ENCODE measurements at regions of chr11 and their contacts with region 1.

Region 1: GRCh38 chr11:727859-728748 is 19.2 kb upstream of the TALDO1 start:
- DNase-seq: peak; percentile 94
- H3K4me3 ChIP-seq: no peak overlapping the region
- H3K27ac ChIP-seq: peak overlapping the region; percentile 55
- H3K4me1 ChIP-seq: peaks cover 51% of the 10 kb centered on the region
- H3K27me3 ChIP-seq: no peaks in the 10 kb centered on the region
- CTCF ChIP-seq: peak; percentile 86 to 100

Region 2: DNA sequence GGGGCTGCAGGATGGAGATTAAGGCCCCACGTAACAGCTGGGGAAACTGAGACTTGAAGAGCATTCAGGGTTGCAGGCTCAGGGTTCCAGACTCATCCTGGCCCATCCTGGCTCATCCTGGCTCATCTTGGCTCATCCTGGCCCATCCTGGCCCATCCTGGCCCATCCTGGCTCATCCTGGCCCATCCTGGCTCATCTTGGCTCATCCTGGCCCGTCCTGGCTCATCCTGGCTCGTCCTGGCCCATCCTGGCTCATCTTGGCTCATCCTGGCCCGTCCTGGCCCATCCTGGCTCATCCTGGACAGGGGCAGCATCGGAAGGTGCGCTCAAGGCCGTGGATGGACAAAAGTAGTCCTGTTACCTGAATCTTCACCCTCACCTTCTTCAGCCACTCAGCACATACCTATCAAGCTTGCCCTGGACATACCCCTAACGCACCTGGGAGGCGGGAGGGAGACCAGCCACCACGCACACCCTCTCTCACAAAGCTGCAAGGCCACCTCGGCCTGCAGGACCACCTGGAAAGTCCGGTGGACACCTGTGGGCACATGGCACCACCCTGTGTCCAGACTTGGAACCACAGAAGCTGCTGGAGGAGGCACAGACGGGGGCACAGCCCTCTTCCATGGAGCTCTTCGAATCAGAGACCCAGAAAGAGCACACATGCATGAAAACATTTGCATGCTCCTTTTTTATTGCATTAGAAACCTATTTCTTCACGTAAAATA is 470.2 kb before region 1 on chr11:
- CTCF ChIA-PET with region 1: no interaction called
- dilution Hi-C with region 1: no loop called
- in situ Hi-C with region 1: no loop called
- intact Hi-C with region 1: no loop called
- DNase-seq: no peak
- H3K4me3 ChIP-seq: no peak overlapping the region
- H3K27ac ChIP-seq: no peak overlapping the region
- H3K4me1 ChIP-seq: no peaks in the 10 kb centered on the region
- H3K27me3 ChIP-seq: no peaks in the 10 kb centered on the region
- CTCF ChIP-seq: peak; percentile 5 to 37

Region 3: GRCh38 chr11:535519-536454 is 192.3 kb before region 1 on chr11 and contains the start of gene HRAS:
- CTCF ChIA-PET with region 1: no interaction called
- dilution Hi-C with region 1: no loop called
- in situ Hi-C with region 1: no loop called
- intact Hi-C with region 1: loop called (anchors 2 kb)
- DNase-seq: peak; percentile 93
- H3K4me3 ChIP-seq: peak within 1 kb of the TSS; percentile 87 to 89 (median 88)
- H3K27ac ChIP-seq: peak within 1 kb of the TSS; percentile 82
- H3K4me1 ChIP-seq: peaks cover 38% of the 10 kb centered on the region
- H3K27me3 ChIP-seq: no peaks in the 10 kb centered on the region
- CTCF ChIP-seq: no peak
- total RNA-seq, gene HRAS: 36.5 to 194 TPM

Region 4: DNA sequence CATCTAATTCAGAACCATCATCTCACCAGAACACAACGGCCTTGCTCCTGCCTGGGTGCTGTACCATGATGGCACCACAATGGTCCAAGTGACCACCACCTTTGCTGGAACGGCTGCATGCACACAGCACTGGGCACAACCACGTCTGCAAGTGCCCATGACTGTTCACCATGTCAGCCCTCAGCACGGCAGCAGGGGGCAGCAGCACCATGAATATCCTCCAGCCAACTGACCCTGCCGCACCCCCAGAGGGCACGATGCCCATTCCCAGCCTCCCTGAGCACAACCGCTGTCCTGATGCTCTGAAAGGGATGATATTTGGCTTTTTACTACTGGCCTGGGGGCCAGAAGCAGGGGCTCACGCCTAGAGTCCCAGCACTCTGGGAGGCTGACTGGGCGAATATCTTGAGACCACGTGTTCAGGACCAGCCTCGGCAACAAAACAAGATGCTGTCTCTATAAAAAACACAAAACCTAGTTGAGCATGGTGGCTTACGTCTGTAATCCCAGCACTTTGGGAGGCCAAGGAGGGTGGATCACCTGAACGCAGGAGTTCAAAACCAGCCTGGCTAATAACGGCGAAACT is 65.3 kb before region 1 on chr11:
- CTCF ChIA-PET with region 1: no interaction called
- dilution Hi-C with region 1: no loop called
- in situ Hi-C with region 1: no loop called
- intact Hi-C with region 1: loop called (anchors 1 kb)
- DNase-seq: peak; percentile 35
- H3K4me3 ChIP-seq: no peak overlapping the region
- H3K27ac ChIP-seq: no peak overlapping the region
- H3K4me1 ChIP-seq: peaks cover 16% of the 10 kb centered on the region
- H3K27me3 ChIP-seq: no peaks in the 10 kb centered on the region
- CTCF ChIP-seq: peak; percentile 74 to 78

Region 5: DNA sequence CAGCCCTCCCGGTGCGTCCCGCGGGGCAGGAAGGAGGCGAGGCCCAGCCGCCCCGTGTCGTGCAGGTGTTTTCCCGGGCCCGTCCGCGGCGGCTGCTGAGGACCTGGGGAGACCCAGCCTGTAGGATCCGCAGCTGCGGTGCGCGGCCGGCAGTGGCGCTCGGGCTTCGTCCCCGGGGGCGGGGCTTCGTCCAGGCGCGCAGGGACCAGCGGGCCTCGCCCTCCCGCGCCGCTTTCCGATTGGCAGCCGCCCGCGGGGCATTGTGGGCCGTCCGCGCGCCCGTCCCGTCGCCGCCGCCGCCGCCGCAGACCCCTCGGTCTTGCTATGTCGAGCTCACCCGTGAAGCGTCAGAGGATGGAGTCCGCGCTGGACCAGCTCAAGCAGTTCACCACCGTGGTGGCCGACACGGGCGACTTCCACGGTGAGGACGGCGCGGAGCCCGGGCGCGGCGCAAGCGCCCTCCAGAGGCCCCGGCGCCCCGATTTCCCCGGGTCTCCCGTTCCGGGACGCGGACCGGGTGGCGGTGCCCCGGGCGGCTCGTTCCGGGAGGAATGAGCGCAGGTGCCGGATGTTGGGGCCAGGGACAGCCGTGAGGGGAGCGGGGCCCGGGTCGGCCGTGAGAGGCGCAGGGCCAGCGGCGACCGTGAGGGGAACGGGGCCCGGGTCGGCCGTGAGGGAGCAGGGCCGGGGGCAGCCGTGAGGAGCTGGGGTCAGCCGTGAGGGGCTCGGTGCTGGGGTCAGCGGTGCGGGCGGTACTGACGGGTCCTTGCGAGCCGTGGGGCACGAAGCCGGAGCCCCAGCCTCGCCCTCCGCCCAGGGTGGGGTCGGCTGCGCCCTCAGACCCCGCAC is 19.3 kb after region 1 on chr11 and contains the start of gene TALDO1:
- CTCF ChIA-PET with region 1: no interaction called
- dilution Hi-C with region 1: no loop called
- in situ Hi-C with region 1: no loop called
- intact Hi-C with region 1: loop called (anchors 2 kb)
- DNase-seq: peak; percentile 86
- H3K4me3 ChIP-seq: peak within 1 kb of the TSS; percentile 87 to 92 (median 90)
- H3K27ac ChIP-seq: peak within 1 kb of the TSS; percentile 71
- H3K4me1 ChIP-seq: peaks cover 19% of the 10 kb centered on the region
- H3K27me3 ChIP-seq: no peaks in the 10 kb centered on the region
- CTCF ChIP-seq: peak; percentile 5 to 42
- total RNA-seq, gene TALDO1: 102 to 140 TPM

Region 6: GRCh38 chr11:798093-798713 is 70.1 kb after region 1 on chr11 and contains the start of gene SLC25A22:
- CTCF ChIA-PET with region 1: no interaction called
- dilution Hi-C with region 1: no loop called
- in situ Hi-C with region 1: no loop called
- intact Hi-C with region 1: loop called (anchors 5 kb)
- DNase-seq: peak; percentile 80
- H3K4me3 ChIP-seq: peak within 1 kb of the TSS; percentile 55 to 93 (median 88)
- H3K27ac ChIP-seq: peak within 1 kb of the TSS; percentile 9
- H3K4me1 ChIP-seq: peaks cover 23% of the 10 kb centered on the region
- H3K27me3 ChIP-seq: no peaks in the 10 kb centered on the region
- CTCF ChIP-seq: peak; percentile 42 to 67
- total RNA-seq, gene SLC25A22: 7.3 to 29.5 TPM

Region 7: DNA sequence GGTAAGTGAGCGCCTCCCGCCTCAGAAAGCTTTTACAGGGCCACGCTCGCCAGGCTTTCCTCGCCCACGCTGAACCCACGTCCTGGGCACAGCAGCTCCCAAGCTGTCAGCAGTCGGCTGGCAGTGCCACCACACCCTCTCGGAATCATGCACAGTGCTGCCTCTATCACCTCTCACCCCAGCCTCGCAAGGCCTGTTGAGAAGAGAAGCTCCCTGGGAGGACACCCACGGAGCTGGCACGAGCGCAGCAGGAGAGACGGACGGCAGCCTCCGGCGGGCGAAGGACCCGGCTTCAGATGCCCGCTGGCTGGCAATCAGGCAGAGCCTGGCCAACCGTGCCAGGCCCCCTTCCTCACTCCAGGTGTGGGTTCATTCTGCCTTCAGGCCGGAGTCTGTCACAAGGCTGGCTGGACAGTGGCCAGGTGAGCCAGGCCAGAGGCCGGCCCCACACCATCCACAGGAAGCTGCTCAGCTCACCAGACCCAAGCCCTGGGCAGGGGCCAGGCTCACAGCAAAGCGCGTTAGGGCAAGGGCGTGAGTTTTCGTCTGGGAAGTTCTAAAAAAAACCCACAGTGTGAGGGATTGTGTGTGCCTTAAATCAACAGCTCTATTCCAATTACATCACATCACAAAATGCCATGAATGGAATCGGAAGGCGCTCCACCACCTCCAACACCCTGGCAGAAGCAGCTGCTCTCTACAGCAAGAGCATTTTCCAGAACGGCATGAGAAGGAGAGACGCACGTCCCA is 548.1 kb after region 1 on chr11:
- CTCF ChIA-PET with region 1: no interaction called
- dilution Hi-C with region 1: no loop called
- in situ Hi-C with region 1: no loop called
- intact Hi-C with region 1: no loop called
- DNase-seq: no peak
- H3K4me3 ChIP-seq: no peak overlapping the region
- H3K27ac ChIP-seq: no peak overlapping the region
- H3K4me1 ChIP-seq: no peaks in the 10 kb centered on the region
- H3K27me3 ChIP-seq: no peaks in the 10 kb centered on the region
- CTCF ChIP-seq: no peak

Measured in mammary epithelial cell (primary cell).